MCF 10A (cell line): ENCODE measurements at regions of chr5 and their contacts with region 1.

Region 1: DNA sequence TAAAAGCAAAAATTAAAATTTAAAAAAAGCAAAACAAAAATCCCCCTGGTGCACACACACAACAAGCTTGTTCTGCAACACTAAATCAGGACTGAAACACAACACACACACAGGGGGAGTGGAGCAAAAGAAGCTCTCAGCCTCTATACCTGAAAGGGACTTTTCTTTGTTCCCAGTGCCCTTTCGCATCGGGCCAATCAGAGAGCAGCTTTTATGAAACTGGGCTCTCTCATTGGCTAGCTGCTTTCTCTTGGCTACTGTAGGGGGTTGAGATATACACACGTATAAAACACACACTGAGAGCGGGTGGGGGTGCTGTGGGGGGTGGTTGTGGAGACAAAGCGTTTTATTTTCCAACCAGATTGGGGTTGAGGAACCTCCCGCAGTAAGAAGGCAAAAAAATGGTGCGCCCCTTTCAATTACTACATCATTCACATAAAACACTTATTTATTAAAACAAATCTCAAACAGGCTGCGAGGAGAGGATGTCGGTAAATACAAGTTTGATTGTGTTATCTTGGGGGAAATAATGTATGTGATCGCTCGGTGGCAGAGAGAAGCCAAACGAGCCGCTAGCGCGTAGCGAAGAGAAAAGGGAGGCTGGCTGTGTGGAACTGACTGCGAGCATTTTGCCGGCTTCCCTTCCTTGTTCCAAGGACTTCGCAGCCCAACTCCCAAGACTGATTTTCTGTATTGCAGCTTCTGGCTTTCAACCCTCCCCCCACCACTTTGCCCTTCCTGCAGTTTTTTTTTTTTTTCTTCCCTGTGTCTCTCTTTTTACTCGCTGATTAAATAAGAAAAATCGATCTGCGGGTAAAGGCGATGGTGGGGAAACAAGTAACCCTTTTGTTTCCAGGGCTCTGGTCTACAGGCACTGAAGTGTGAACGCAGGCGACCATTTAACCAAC is 2.5 kb upstream of the ZNF608 start:
- DNase-seq: peak; percentile 97
- H3K4me3 Mint-ChIP-seq: no peak overlapping the region
- H3K27ac Mint-ChIP-seq: no peak overlapping the region
- H3K4me1 Mint-ChIP-seq: peaks cover 12% of the 10 kb centered on the region
- H3K27me3 Mint-ChIP-seq: no peaks in the 10 kb centered on the region
- CTCF ChIP-seq: no peak

Region 2: GRCh38 chr5:124410539-124411488 is 338.1 kb before region 1 on chr5:
- CTCF ChIA-PET with region 1: no interaction called
- POLR2A ChIA-PET with region 1: no interaction called
- intact Hi-C with region 1: loop called (anchors 5 kb)
- DNase-seq: no peak
- H3K4me3 Mint-ChIP-seq: no peak overlapping the region
- H3K27ac Mint-ChIP-seq: no peak overlapping the region
- H3K4me1 Mint-ChIP-seq: no peaks in the 10 kb centered on the region
- H3K27me3 Mint-ChIP-seq: no peaks in the 10 kb centered on the region
- CTCF ChIP-seq: peak; percentile 14

Region 3: GRCh38 chr5:124783794-124784193 is 34.9 kb after region 1 on chr5:
- CTCF ChIA-PET with region 1: interaction called, 4 read pairs
- POLR2A ChIA-PET with region 1: interaction called, 20 read pairs
- intact Hi-C with region 1: no loop called
- DNase-seq: peak; percentile 96
- H3K4me3 Mint-ChIP-seq: no peak overlapping the region
- H3K27ac Mint-ChIP-seq: peak overlapping the region; percentile 36
- H3K4me1 Mint-ChIP-seq: peaks cover 5% of the 10 kb centered on the region
- H3K27me3 Mint-ChIP-seq: no peaks in the 10 kb centered on the region
- CTCF ChIP-seq: no peak

Region 4: DNA sequence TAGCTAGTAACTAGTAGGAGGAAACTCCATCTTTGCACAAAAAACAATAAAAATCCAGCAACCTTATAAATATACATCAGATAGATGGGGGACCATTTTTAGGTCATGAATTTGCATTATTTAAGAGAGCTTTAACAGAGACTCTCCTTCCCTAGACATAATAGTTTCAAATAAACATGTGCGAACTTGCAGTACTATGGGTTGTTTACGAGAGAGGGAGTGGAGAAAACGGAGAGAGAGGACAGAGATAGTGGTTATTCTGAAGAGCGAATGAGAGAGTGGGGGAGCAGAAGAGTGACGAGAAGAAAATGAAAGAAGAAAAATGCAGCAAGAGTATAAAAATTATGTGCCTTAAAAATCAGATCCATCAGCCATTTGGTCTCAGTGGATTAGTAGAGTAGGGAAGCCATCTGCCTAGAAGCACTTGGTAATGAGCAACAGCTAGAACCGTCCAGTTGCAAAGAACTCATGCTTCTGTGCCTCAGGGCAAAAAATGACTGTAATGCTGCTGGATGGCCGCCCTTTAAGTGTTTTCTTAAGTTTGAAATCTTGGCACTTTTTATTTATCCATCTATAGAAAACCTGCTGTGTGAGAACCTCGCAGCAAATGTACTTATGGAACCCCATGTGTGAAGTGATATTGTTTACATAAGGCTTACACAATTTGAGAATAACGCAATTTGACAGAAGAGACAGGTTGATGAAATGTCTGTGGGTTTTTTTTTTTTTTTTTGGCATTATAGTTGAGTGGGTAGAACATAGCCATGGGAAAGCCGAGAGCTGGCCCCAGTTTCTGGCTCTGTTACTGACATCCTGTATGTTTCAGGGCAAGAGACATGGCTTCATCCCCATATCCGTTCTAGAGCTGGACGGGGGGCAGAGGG is 93.1 kb after region 1 on chr5:
- CTCF ChIA-PET with region 1: interaction called, 3 read pairs
- POLR2A ChIA-PET with region 1: interaction called, 88 read pairs
- intact Hi-C with region 1: loop called (anchors 1 kb)
- DNase-seq: peak; percentile 100
- H3K4me3 Mint-ChIP-seq: peak overlapping the region; percentile 38
- H3K27ac Mint-ChIP-seq: peak overlapping the region; percentile 3
- H3K4me1 Mint-ChIP-seq: peaks cover 21% of the 10 kb centered on the region
- H3K27me3 Mint-ChIP-seq: no peaks in the 10 kb centered on the region
- CTCF ChIP-seq: no peak

Region 5: DNA sequence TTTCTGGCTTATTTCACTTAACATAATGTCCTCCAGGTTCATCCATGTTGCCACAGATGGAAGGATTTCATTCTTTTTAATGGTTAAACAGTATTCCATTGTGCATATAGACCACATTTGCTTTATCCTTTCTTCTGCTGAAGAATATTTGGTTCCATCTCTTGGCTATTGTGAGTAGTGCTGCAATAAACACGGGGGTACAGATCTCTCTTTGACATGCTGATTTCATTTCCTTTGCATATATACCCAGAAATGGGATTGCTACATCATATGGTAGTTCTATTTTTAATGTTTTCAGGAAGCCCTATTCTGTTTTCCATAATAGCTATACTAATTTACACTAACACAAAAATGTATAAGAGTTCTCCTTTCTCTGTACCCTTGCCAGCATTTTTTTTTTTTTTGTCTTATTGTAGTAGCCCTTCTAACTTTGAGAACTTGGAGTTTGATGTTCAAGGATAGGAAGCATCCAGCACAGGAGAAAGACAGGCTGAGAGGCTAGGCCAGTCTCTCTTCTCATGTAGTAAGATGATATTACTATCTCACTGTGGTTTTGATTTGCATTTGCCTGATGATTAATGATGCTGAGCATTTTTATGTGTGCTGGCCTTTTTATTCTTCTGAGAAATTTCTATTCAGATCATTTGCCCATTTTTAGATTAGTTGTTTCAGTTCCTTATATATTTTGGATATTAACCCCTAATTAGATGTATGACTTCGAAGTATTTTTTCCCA is 589.7 kb after region 1 on chr5:
- CTCF ChIA-PET with region 1: no interaction called
- POLR2A ChIA-PET with region 1: no interaction called
- intact Hi-C with region 1: loop called (anchors 10 kb)
- DNase-seq: no peak
- H3K4me3 Mint-ChIP-seq: no peak overlapping the region
- H3K27ac Mint-ChIP-seq: no peak overlapping the region
- H3K4me1 Mint-ChIP-seq: no peaks in the 10 kb centered on the region
- H3K27me3 Mint-ChIP-seq: no peaks in the 10 kb centered on the region
- CTCF ChIP-seq: peak; percentile 13